ENCODE measurements at regions of chr4 and their contacts with region 1.

Region 1: DNA sequence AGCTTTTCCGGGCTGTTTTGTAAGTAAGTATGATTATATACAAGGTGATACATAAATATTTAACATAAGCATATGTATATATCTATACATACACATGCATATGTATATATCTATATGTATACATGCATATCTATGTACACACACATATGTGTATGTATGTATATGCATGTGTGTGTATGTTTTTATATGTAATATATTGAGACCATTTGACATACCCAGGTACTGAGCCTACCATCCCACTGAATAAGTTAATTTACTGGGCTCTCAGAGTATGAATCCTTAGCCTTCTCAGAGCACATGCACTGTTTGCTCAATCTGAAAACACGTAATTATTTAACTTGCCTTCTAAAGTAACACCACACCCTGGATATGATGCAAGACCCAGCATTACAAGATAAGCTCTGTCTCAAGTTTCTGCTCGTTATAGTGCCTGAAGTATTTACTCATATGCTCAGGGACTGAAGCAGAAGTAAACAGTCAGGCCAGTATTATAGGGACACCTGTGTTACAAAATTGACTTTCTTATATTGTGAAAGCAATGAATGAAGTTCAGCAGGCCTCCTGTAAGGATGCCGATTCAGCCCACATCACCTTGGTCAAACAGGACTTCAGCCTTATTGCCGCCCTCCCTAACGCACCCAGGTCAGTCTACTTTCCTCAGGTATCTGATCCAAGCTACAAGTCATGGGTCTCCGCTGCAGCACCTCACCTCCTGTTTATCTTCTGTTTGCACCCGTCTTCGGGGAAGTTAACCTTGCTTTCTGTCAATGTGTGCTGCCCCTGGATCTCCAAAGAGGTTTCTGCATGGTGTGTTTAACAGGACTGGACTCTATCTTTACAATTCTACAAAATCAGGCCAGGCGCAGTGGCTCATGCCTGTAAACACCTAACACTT is 43.0 kb upstream of the KLF3 start:
- DNase-seq: no peak
- ATAC-seq: no peak
- H3K4me3 Mint-ChIP-seq: no peak overlapping the region
- H3K27ac Mint-ChIP-seq: no peak overlapping the region
- H3K4me1 Mint-ChIP-seq: peaks cover 18% of the 10 kb centered on the region
- H3K27me3 Mint-ChIP-seq: no peaks in the 10 kb centered on the region

Region 2: DNA sequence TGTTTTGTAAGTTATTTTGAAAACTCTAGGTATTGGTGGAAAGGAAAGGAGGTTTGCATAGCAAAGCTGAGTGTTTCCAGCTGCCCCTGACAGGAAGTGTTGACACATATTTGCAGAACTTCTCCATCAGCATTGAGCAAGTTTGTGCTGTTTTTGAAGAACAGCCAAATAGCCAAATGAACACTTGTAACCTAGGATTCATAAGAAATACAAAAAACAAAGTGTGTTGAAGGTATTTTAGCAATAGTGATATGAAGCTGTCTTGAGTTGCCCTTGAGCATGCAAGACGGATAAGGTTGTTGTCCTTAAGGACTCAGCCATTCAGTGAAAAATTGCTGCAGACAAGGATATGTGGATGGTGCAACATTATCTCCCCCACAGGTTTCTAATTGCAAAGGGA is 862.8 kb before region 1 on chr4:
- CTCF ChIA-PET with region 1: no interaction called
- POLR2A ChIA-PET with region 1: no interaction called
- intact Hi-C with region 1: no loop called
- DNase-seq: no peak
- ATAC-seq: peak; percentile 36
- H3K4me3 Mint-ChIP-seq: no peak overlapping the region
- H3K27ac Mint-ChIP-seq: no peak overlapping the region
- H3K4me1 Mint-ChIP-seq: peaks cover 20% of the 10 kb centered on the region
- H3K27me3 Mint-ChIP-seq: no peaks in the 10 kb centered on the region

Region 3: GRCh38 chr4:38523524-38524448 is 97.3 kb before region 1 on chr4:
- CTCF ChIA-PET with region 1: no interaction called
- POLR2A ChIA-PET with region 1: no interaction called
- intact Hi-C with region 1: no loop called
- DNase-seq: peak; percentile 76
- ATAC-seq: peak; percentile 88
- H3K4me3 Mint-ChIP-seq: peak overlapping the region; percentile 9
- H3K27ac Mint-ChIP-seq: peak overlapping the region; percentile 58
- H3K4me1 Mint-ChIP-seq: peaks cover 20% of the 10 kb centered on the region
- H3K27me3 Mint-ChIP-seq: peaks cover 4% of the 10 kb centered on the region

Region 4: DNA sequence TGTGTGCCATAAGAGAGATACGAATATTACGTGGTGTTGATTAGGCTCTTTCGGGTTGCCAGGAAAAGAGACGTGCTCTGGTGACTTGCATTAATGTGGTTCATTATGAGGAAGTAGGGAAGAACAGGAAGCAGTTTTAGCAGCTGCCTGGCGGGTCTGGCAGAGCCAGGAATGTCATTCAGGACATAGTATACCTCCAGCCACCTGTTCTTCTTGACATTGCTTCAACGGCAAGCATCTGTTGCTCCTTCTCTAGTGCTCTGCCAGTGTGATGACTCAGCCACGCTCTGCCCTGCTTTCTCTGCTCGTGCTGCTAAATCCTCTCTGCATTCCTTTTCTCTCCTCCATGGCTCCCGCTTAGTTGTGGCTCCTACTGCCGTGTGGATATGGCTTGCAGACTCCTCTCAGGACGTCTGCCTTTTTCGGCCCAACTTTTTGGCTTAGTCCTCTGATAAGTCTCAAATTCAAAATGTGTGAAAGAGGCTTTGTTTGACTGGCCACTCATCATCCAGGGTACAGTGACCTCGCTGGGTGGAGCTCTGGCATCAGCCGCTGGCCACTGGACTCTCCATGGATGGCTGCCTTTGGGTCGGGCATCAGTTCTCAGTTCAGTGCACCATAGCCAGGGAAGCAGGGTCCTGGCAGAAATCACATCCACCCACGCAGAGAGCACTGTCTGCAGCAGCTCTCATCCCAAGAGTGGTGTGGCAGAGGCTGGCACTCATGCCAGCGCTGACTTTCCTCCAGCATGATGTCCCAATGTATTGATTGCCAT is 46.3 kb before region 1 on chr4:
- CTCF ChIA-PET with region 1: no interaction called
- POLR2A ChIA-PET with region 1: no interaction called
- intact Hi-C with region 1: loop called in 1 of 2 experiments (anchors 5 kb)
- DNase-seq: no peak
- ATAC-seq: no peak
- H3K4me3 Mint-ChIP-seq: no peak overlapping the region
- H3K27ac Mint-ChIP-seq: no peak overlapping the region
- H3K4me1 Mint-ChIP-seq: peaks cover 5% of the 10 kb centered on the region
- H3K27me3 Mint-ChIP-seq: peaks cover 3% of the 10 kb centered on the region

Region 5: DNA sequence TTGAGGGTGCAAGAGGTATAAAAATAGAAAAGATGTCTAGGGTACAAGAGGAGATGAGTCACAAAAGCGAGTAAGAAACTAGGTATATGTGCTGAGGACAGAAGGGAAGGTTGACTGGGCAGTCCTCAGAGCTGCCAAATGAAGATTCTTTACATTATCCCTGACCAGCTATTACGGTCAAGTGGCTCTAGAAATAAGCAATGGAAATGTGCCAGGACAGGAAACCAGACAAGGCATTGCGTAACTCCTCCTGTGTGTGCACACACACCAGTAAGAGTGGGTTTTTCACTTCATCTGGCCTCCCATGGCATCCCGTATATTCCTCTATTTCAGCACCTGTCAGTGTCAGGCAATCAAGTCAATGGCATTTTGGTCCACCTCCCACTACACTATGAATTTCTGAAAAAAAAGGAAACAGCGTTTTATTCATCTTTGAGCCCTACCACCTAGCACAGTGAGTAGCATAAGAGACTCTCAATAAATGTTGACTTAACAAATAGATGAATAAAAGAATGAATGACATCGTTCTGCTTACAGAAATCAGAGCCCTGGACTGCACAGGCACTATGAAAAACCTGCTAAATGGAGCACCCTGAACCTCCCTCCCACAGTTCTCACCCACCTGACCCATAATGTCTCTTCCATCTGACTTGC is 19.7 kb before region 1 on chr4:
- CTCF ChIA-PET with region 1: no interaction called
- POLR2A ChIA-PET with region 1: no interaction called
- intact Hi-C with region 1: no loop called
- DNase-seq: no peak
- ATAC-seq: no peak
- H3K4me3 Mint-ChIP-seq: no peak overlapping the region
- H3K27ac Mint-ChIP-seq: no peak overlapping the region
- H3K4me1 Mint-ChIP-seq: peaks cover 16% of the 10 kb centered on the region
- H3K27me3 Mint-ChIP-seq: no peaks in the 10 kb centered on the region